ENCODE measurements at regions of chr1 and their contacts with region 1.

Region 1: DNA sequence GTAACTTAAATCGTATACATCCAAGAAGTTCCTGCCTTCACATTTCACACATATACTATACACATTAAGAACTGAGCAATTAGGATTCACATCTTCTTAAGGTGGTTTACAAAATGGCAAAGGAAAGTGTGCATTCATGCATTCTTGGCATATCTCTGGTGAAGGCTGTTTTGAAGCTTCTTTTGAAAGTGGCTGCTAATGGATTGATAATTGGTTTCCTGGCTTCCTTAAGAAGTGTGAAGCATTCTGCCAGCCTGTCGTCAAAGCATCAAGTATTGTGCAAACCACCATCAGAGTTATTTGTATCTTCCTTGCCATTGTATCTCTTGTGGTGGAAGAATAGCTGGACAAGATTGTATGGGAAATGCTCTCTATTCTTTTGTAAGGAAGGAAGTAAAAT is 95.1 kb upstream of the HMGB4 start:
- DNase-seq: no peak
- H3K4me3 ChIP-seq: no peak overlapping the region
- H3K27ac ChIP-seq: no peak overlapping the region
- H3K4me1 ChIP-seq: no peaks in the 10 kb centered on the region
- H3K27me3 ChIP-seq: no peaks in the 10 kb centered on the region
- CTCF ChIP-seq: no peak
- EP300 ChIP-seq: no peak
- POLR2A ChIP-seq: no peak

Region 2: GRCh38 chr1:33753087-33753856 is 15.5 kb before region 1 on chr1:
- in situ Hi-C with region 1: no loop called
- intact Hi-C with region 1: no loop called
- DNase-seq: no peak
- H3K4me3 ChIP-seq: no peak overlapping the region
- H3K27ac ChIP-seq: no peak overlapping the region
- H3K4me1 ChIP-seq: no peaks in the 10 kb centered on the region
- H3K27me3 ChIP-seq: no peaks in the 10 kb centered on the region
- CTCF ChIP-seq: no peak
- EP300 ChIP-seq: no peak
- POLR2A ChIP-seq: no peak

Region 3: DNA sequence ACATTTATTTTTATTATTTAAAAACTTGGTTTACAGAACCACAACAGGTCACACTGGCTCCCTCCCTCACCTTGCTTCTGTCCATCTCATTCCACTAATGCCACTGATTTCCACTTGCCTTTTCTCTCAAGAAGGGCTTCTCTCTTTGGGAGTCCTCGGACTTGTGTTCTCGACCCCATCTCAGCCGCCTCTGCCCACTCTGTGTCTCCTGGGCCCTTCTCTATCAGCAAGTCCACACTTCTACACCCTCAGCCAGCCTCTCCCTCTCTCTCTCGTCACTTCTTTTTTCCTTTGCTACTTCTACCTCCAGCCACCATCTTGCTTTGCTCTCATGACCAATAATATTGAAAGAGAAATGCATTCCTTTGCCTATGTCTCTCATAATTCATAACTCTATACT is 224.5 kb after region 1 on chr1:
- in situ Hi-C with region 1: no loop called
- intact Hi-C with region 1: loop called (anchors 5 kb)
- DNase-seq: no peak
- H3K4me3 ChIP-seq: no peak overlapping the region
- H3K27ac ChIP-seq: no peak overlapping the region
- H3K4me1 ChIP-seq: no peaks in the 10 kb centered on the region
- H3K27me3 ChIP-seq: no peaks in the 10 kb centered on the region
- CTCF ChIP-seq: no peak
- EP300 ChIP-seq: no peak
- POLR2A ChIP-seq: no peak